Heart right ventricle (tissue), 16 donors: ENCODE measurements at regions of chr10 and their contacts with region 1.

Region 1: DNA sequence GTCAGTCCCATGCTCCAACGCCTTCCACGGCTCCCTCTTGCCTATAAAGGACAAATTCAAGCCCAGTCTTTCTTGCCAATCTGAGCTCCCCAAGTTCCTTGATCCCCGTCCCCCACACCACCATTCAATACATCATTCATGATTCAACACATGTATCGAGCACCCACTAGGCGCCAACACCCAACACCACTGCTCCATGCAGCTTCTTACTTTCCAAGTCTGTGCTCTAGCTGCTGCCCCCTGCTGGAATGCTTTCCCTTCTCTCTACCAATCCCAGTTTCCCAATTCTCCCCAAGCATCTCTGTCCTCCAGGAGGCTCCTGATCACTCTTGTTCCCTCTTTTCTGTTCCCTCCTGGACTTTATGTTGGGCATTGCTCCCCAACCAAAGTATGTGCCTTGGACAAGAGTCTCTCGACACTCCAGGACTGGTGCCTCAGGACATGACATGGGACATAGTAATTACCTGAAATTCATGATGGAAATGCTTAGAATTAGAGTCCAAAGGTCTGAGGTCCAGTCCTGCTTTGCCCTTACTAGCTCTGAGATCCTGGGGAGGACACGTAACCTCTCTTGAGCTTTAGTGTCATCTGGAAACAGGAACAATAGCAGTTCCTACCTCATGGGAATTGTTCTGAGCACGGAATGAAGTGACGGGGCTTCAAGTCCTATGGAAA is 172.7 kb downstream of the NEURL1 start:
- DNase-seq: no peak
- ATAC-seq: no peak
- H3K4me3 ChIP-seq: no peak overlapping the region
- H3K27ac ChIP-seq: peak overlapping the region in 9 of 10 donors; percentile 23 to 83 (median 72)
- H3K4me1 ChIP-seq: peaks cover 26 to 90% (median 70%) of the 10 kb centered on the region in 9 donors
- H3K27me3 ChIP-seq: no peaks in the 10 kb centered on the region
- CTCF ChIP-seq: peak in 8 of 9 donors; percentile 11 to 54 (median 46)

Region 2: DNA sequence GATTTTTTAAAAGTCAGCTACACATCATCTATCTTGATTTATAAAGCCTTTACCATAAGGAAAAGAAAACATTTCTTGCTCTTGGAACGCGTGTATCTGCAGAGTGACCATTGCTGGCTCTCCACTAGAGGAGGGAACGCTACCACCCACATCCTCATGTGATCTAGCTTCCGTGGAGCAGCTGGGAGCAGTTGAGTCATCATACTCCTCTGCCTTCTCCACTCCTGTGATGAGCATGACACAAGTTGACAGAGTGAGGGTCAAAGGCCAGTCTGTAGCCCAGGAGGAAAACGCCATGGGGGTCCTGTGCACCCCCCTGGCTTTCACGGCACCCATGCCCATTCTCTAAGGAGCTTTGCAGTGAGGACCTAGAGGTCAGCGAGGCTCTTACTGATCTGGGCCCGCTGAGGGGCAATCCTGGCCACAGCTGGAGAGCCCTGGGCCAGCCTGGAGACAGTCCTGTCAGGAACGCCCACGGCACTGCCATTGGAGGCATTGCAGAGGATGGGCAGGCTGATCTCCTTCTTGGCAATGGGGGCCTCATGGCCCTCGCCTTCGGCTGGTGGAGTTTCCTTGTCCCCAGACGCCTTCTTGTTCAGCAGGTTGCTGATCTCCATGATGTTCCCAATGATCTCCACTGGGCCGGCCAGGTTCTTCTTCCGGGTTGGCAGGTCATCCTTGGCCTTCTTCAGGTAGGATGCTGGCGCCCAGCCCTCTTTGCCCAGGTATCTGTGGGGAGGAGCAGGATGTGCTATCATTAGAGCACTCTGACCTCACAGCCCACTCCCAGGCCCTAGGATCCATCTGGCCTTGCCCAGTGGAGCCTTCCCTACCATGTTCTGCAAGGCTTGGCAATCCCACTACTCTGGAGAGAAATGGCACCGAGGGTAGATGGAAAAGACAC is 53.5 kb before region 1 on chr10:
- intact Hi-C with region 1: loop called in 6 of 10 experiments (anchors 5 to 10 kb)
- DNase-seq: peak in 1 of 2 donors; percentile 14
- ATAC-seq: peak in 3 of 8 donors; percentile 33 to 46 (median 41)
- H3K4me3 ChIP-seq: no peak overlapping the region
- H3K27ac ChIP-seq: peak overlapping the region in 1 of 10 donors; percentile 3
- H3K4me1 ChIP-seq: peaks cover 18 to 75% (median 46%) of the 10 kb centered on the region in 9 donors
- H3K27me3 ChIP-seq: no peaks in the 10 kb centered on the region
- CTCF ChIP-seq: no peak

Region 3: GRCh38 chr10:103648921-103649532 is 17.2 kb before region 1 on chr10:
- intact Hi-C with region 1: loop called in 1 of 10 experiments (anchors 1 kb)
- DNase-seq: no peak
- ATAC-seq: peak in 5 of 8 donors; percentile 3 to 66 (median 16)
- H3K4me3 ChIP-seq: no peak overlapping the region
- H3K27ac ChIP-seq: peak overlapping the region in 4 of 10 donors; percentile 13 to 54 (median 30)
- H3K4me1 ChIP-seq: peaks cover 27 to 93% (median 80%) of the 10 kb centered on the region in 9 donors
- H3K27me3 ChIP-seq: no peaks in the 10 kb centered on the region
- CTCF ChIP-seq: no peak